AG04450 (cell line): ENCODE measurements at regions of chr1 and their contacts with region 1.

Region 1: DNA sequence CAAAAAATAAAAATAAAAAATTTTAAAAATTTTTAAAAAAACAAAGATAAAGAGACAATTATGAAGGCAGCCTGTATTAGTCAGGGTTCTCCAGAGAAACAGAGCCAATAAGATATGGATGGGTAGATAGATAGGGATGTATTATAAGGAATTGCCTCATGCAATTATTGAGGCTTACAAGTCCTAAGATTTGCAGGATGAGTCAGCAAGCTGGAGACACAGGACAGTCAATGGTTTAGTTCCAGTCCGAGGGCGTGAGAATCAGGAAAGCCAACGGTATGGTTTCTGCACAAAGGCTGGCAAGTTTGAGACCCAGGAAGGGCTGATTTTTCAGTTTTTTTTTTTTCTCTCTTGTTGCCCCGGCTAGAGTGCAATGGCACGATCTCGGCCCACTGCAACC is 24.1 kb upstream of the EIF4G3 start:
- DNase-seq: no peak
- H3K4me3 ChIP-seq: no peak overlapping the region
- H3K27ac ChIP-seq: no peak overlapping the region
- H3K27me3 ChIP-seq: no peaks in the 10 kb centered on the region
- CTCF ChIP-seq: no peak

Region 2: GRCh38 chr1:20696397-20697329 is 504.1 kb before region 1 on chr1:
- CTCF ChIA-PET with region 1: interaction called, 94 read pairs
- POLR2A ChIA-PET with region 1: no interaction called
- DNase-seq: peak; percentile 90
- H3K4me3 ChIP-seq: peak overlapping the region; percentile 65
- H3K27ac ChIP-seq: peak overlapping the region; percentile 99
- H3K27me3 ChIP-seq: no peaks in the 10 kb centered on the region
- CTCF ChIP-seq: peak; percentile 81

Region 3: GRCh38 chr1:20981915-20982314 is 218.9 kb before region 1 on chr1:
- CTCF ChIA-PET with region 1: interaction called, 20 read pairs
- POLR2A ChIA-PET with region 1: no interaction called
- DNase-seq: no peak
- H3K4me3 ChIP-seq: no peak overlapping the region
- H3K27ac ChIP-seq: no peak overlapping the region
- H3K27me3 ChIP-seq: no peaks in the 10 kb centered on the region
- CTCF ChIP-seq: peak; percentile 28; the same call in 1 of the 2 replicates

Region 4: GRCh38 chr1:21139601-21140000 is 61.2 kb before region 1 on chr1:
- CTCF ChIA-PET with region 1: no interaction called
- POLR2A ChIA-PET with region 1: no interaction called
- DNase-seq: no peak
- H3K4me3 ChIP-seq: no peak overlapping the region
- H3K27ac ChIP-seq: no peak overlapping the region
- H3K27me3 ChIP-seq: no peaks in the 10 kb centered on the region
- CTCF ChIP-seq: no peak

Region 5: GRCh38 chr1:21184276-21184675 is 16.5 kb before region 1 on chr1:
- CTCF ChIA-PET with region 1: interaction called, 10 read pairs
- POLR2A ChIA-PET with region 1: no interaction called
- DNase-seq: no peak
- H3K4me3 ChIP-seq: no peak overlapping the region
- H3K27ac ChIP-seq: no peak overlapping the region
- H3K27me3 ChIP-seq: no peaks in the 10 kb centered on the region
- CTCF ChIP-seq: no peak